ENCODE measurements at regions of chr1 and their contacts with region 1.

Region 1: DNA sequence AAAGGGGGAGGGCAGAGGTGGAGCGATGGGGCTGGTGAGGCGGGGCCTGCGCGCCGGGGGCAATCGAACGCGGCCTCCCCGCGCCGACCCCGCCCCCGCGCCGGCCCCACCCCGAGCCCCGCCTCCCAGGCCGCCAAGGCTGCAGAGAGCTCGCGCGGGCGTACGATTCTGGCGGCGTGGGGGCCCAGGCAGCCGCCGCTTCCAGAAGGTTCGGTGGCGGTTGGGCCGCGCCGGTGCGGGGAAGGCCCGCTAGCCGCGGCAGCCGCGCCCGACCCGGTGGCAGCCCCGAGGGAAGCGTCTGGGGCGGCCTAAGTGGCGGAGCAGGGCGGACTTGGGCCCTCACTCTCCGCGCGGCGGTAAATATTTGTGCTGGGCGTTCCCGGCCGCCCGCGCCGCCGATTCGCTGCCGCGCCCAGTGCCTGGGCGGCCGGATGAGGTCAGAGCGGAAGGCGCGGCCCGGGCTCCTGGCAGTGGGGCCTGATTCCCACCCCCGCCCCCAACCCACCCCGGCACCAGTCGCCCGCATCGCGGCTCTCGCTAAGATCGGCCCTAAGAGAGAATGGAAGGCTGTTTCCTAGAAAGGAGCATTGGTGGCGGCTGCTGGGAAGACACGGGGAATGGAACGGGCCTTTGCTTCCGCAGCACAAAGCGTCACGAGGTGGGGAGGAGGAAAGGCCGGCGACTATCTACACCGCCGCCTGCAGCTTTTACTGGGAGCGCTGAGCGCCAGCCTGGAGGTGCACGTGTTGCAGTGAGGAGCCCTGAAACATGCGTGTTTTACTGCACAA is at the start of gene ACOT7:
- DNase-seq: peak; percentile 94
- ATAC-seq: peak; percentile 87
- H3K4me3 Mint-ChIP-seq: peak within 1 kb of the TSS; percentile 89
- H3K27ac Mint-ChIP-seq: peak within 1 kb of the TSS; percentile 96
- H3K4me1 Mint-ChIP-seq: peaks cover 23% of the 10 kb centered on the region
- H3K27me3 Mint-ChIP-seq: no peaks in the 10 kb centered on the region
- total RNA-seq, gene ACOT7: 43.9 to 52.8 TPM

Region 2: GRCh38 chr1:6347641-6348487 is 45.7 kb before region 1 on chr1:
- POLR2A ChIA-PET with region 1: interaction called, 47 read pairs
- DNase-seq: peak; percentile 79
- ATAC-seq: peak; percentile 57
- H3K4me3 Mint-ChIP-seq: peak overlapping the region; percentile 58
- H3K27ac Mint-ChIP-seq: peak overlapping the region; percentile 96
- H3K4me1 Mint-ChIP-seq: peaks cover 24% of the 10 kb centered on the region
- H3K27me3 Mint-ChIP-seq: no peaks in the 10 kb centered on the region

Measured in activated naive CD8-positive, alpha-beta T cell treated with anti-CD3 and anti-CD28 coated beads, Interleukin-2, amount 10 ng/mL, durations not matched to agents 7 days and 5 days (primary cell).